Activated CD4-positive, alpha-beta memory T cell treated with anti-CD3 and anti-CD28 coated beads for 36 hours (primary cell): ENCODE measurements at regions of chr3 and their contacts with region 1.

Region 1: DNA sequence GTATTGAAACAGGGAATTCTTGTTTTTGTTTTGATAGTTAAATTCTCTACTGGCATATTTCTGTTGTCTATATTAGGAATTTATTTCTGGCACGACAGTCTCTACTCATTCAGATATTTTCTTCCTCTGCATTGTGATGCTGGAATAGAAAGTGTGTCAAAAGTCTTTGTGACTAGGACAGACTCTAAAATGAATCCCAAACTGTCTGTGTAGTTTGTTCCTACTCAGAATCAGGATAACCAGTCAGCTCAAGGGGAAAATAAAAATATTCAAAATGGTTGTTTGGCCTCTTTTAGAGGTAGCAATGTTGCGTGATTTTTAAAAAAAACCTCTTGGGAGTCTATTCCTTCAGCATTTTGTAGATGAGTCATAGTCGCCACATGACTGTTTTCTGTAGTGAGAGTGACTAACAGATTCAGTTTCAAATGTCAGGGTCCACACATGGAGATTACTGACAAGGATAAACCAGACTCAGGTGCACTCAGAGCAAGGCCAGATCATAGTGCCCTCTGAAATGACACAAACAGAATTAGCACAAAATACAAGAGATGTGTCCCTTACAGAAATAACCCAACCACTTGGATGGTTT is 13.1 kb downstream of the SLC7A14 start:
- DNase-seq: peak; percentile 35
- H3K4me3 Mint-ChIP-seq: no peak overlapping the region
- H3K27ac Mint-ChIP-seq: no peak overlapping the region
- H3K4me1 Mint-ChIP-seq: peaks cover 20% of the 10 kb centered on the region
- H3K27me3 Mint-ChIP-seq: peaks cover 21% of the 10 kb centered on the region

Region 2: DNA sequence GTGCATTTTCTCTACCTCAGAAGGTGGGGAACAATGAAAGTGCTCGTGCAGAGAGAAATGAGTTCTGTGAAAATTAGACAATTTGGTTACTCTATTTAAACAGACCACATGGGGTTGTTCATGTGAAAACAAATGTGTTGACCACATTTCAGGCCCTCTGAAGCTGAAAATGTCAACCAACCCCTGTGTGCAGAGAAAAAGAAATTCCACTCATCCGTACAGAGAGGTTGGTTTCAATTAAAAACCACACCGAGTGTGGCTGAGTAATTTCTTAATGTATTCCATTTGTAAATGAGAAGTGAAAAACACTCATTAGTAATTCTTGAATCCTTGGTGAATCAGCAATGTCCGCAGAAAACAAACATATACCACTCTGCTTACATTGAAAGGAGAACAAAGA is 60.0 kb after region 1 on chr3:
- CTCF ChIA-PET with region 1: no interaction called
- POLR2A ChIA-PET with region 1: no interaction called
- intact Hi-C with region 1: loop called (anchors 2 kb)
- DNase-seq: no peak
- H3K4me3 Mint-ChIP-seq: no peak overlapping the region
- H3K27ac Mint-ChIP-seq: no peak overlapping the region
- H3K4me1 Mint-ChIP-seq: peaks cover 2% of the 10 kb centered on the region
- H3K27me3 Mint-ChIP-seq: peaks cover 25% of the 10 kb centered on the region